ENCODE measurements at regions of chr14 and their contacts with region 1.

Region 1: DNA sequence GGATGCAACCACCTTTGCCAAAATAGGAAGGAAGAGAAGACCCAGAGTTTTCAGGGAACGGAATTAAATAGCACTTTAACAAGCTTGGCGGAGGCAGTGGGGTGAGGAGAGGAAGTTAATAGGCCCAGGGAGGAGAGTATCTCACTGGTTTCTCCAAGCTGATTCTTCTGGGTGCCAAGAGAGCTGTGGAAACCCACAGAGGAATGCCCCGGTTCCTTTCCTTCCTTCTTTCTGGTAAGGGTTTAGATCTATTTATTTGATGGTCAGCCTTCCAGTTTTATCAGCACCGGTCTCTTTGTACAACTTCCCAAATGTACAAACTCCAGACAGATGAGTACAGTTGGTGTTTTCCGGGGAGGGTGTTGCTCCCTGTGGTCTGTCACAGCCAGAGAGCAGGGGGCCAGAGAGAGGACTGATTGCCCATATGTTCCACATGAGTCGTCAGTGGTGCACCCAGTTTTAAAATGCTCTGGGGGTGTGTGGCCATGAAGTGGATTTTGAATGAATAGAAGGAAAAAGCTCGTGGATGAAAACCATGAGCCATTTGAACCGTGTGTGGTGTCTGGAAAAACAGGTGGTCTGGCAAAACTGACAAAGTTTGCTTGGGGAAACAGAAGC is 26.6 kb downstream of the PRKCH start:
- DNase-seq: peak; percentile 48
- H3K4me3 Mint-ChIP-seq: peak overlapping the region; percentile 64
- H3K27ac Mint-ChIP-seq: peak overlapping the region; percentile 97
- H3K4me1 Mint-ChIP-seq: peaks cover 99% of the 10 kb centered on the region
- H3K27me3 Mint-ChIP-seq: no peaks in the 10 kb centered on the region

Region 2: GRCh38 chr14:60485598-60486251 is 862.2 kb before region 1 on chr14 and contains the start of gene C14orf39:
- CTCF ChIA-PET with region 1: no interaction called
- intact Hi-C with region 1: no loop called
- DNase-seq: peak; percentile 21
- H3K4me3 Mint-ChIP-seq: no peak within 1 kb of the TSS
- H3K27ac Mint-ChIP-seq: no peak within 1 kb of the TSS
- H3K4me1 Mint-ChIP-seq: peaks cover 2% of the 10 kb centered on the region
- H3K27me3 Mint-ChIP-seq: peaks cover 27% of the 10 kb centered on the region
- total RNA-seq, gene C14orf39: not detected

Region 3: DNA sequence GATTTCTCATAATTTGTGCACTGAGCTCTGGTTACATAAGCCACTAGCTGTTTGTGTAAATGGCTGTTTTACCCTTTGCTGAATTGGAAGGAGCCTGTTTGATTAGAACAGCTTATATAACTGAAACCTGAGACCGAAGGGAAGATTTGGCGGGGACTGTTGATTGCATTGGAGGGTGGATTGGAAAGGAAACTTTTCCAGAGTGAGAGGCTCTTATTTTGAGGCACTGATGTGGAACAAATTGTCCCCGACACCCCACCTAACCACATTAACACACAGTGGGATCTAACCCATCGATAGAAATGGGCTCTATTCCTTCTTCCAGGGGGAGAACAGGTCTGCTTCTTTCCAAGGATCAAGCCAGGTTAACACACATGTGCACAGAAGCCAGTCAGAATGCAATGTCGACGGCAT is 118.5 kb before region 1 on chr14:
- CTCF ChIA-PET with region 1: no interaction called
- intact Hi-C with region 1: no loop called
- DNase-seq: no peak
- H3K4me3 Mint-ChIP-seq: no peak overlapping the region
- H3K27ac Mint-ChIP-seq: no peak overlapping the region
- H3K4me1 Mint-ChIP-seq: peaks cover 3% of the 10 kb centered on the region
- H3K27me3 Mint-ChIP-seq: peaks cover 11% of the 10 kb centered on the region

Region 4: DNA sequence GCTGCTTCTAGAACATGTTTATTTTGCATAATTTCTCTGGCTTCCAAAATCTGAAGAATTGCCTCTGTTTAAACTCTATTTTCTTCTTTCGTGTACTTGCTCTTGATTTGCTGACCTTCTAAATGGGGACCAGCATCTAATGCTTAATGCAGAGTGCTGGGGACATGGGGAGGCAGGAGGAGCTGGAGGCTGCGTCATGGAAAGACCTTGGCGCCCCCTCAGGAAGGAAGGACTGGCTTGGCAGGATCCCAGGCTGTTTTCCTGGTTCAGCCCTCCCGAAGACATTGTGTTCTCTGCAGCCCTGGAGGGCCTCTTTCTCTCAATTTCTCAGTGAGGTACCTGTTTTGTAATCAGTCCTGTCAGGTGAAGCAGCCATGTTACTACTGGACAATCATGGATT is 21.1 kb before region 1 on chr14:
- CTCF ChIA-PET with region 1: interaction called, 7 read pairs
- intact Hi-C with region 1: loop called (anchors 1 kb)
- DNase-seq: no peak
- H3K4me3 Mint-ChIP-seq: peak overlapping the region; percentile 63
- H3K27ac Mint-ChIP-seq: peak overlapping the region; percentile 95
- H3K4me1 Mint-ChIP-seq: peaks cover 70% of the 10 kb centered on the region
- H3K27me3 Mint-ChIP-seq: no peaks in the 10 kb centered on the region

Region 5: GRCh38 chr14:61360796-61361525 is 13.0 kb after region 1 on chr14:
- CTCF ChIA-PET with region 1: interaction called, 4 read pairs
- intact Hi-C with region 1: loop called (anchors 1 kb)
- DNase-seq: no peak
- H3K4me3 Mint-ChIP-seq: no peak overlapping the region
- H3K27ac Mint-ChIP-seq: peak overlapping the region; percentile 58
- H3K4me1 Mint-ChIP-seq: peaks cover 55% of the 10 kb centered on the region
- H3K27me3 Mint-ChIP-seq: no peaks in the 10 kb centered on the region

Region 6: DNA sequence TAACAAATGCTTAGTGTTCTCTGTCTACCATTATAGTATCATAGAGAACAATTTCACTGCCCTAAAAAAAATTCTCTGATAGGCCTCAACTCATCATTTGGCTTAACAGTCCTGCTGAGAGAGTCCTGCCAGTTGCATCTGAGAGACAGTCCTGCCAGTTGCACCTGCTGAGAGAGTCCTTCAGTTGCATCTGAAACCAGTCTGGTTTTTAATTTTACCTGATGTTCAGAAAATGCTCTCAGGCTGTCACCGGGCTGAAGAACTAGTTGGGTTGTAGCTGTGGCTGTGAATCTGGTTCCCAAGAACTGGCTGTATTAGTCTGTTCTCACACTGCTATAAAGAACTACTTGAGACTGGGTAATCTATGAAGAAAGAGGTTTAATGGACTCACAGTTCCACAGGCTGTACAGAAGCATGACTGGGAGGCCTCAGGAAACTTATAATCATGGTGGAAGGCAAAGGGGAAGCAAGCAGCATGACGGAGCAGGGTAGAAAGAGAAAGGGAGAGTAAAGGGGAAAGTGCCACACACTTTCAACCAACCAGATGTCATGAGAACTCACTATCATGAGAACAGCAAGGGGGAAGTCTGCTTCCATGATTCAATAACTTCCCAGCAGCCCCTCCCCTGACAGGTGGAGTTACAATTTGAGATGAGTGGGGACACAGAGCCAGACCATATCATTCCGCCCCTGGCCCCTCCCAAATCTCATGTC is 25.1 kb after region 1 on chr14:
- CTCF ChIA-PET with region 1: interaction called, 3 read pairs
- intact Hi-C with region 1: loop called (anchors 1 kb)
- DNase-seq: peak; percentile 45
- H3K4me3 Mint-ChIP-seq: no peak overlapping the region
- H3K27ac Mint-ChIP-seq: peak overlapping the region; percentile 84
- H3K4me1 Mint-ChIP-seq: peaks cover 87% of the 10 kb centered on the region
- H3K27me3 Mint-ChIP-seq: no peaks in the 10 kb centered on the region

Region 7: DNA sequence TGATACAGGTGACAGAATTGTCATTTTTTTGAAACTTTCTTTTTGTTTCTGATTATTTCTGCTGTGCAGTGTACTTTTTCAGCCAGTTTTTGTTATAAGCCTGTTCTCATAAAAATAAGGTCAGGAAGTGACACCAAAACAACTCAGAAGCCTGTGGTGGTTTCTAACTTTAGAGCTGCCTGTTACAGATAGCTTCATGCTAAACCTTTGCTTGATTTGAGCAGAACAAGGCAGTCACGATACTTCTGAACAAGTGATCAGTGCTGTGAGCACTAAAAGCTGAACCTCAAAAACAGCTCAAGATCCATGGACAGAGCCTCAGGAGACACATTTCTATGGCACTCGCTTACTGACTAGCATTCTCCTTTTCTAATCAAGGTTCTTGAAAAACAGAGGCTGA is 55.5 kb after region 1 on chr14:
- CTCF ChIA-PET with region 1: no interaction called
- intact Hi-C with region 1: loop called (anchors 1 kb)
- DNase-seq: no peak
- H3K4me3 Mint-ChIP-seq: peak overlapping the region; percentile 63
- H3K27ac Mint-ChIP-seq: peak overlapping the region; percentile 91
- H3K4me1 Mint-ChIP-seq: peaks cover 86% of the 10 kb centered on the region
- H3K27me3 Mint-ChIP-seq: no peaks in the 10 kb centered on the region

Region 8: GRCh38 chr14:61444215-61444768 is 96.4 kb after region 1 on chr14:
- CTCF ChIA-PET with region 1: no interaction called
- intact Hi-C with region 1: loop called (anchors 2 kb)
- DNase-seq: peak; percentile 90
- H3K4me3 Mint-ChIP-seq: peak overlapping the region; percentile 66
- H3K27ac Mint-ChIP-seq: peak overlapping the region; percentile 96
- H3K4me1 Mint-ChIP-seq: peaks cover 93% of the 10 kb centered on the region
- H3K27me3 Mint-ChIP-seq: no peaks in the 10 kb centered on the region

Region 9: DNA sequence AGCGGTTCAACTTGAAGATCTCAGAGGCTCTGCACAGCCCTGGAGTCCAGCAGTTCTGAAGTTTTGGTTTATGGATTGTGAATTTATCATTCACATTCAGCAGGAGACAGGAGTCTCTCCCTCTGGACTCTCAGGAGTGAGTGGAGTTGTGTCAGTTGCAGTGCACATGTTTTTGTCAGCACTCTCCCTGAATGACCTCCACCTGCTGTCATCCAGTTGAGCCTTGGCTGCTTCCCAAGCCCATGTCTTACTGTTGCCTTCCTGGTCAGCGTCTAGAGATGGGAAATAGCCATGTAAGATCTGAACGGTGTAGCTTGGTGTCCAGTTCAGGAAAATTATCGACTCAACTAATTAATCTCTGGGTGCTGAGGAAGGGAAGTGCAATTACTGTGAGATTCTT is 106.6 kb after region 1 on chr14:
- CTCF ChIA-PET with region 1: no interaction called
- intact Hi-C with region 1: no loop called
- DNase-seq: no peak
- H3K4me3 Mint-ChIP-seq: no peak overlapping the region
- H3K27ac Mint-ChIP-seq: peak overlapping the region; percentile 95
- H3K4me1 Mint-ChIP-seq: peaks cover 88% of the 10 kb centered on the region
- H3K27me3 Mint-ChIP-seq: no peaks in the 10 kb centered on the region

Measured in activated naive CD4-positive, alpha-beta T cell treated with anti-CD3 and anti-CD28 coated beads for 36 hours (primary cell).